ENCODE measurements at regions of chr22 and their contacts with region 1.

Region 1: GRCh38 chr22:36644333-36644757 is 59.2 kb downstream of the CACNG2 start:
- DNase-seq: no peak
- ATAC-seq: no peak
- H3K4me3 Mint-ChIP-seq: no peak overlapping the region
- H3K27ac Mint-ChIP-seq: no peak overlapping the region
- H3K4me1 Mint-ChIP-seq: no peaks in the 10 kb centered on the region
- H3K27me3 Mint-ChIP-seq: peaks cover 39% of the 10 kb centered on the region
- CTCF ChIP-seq: no peak

Region 2: DNA sequence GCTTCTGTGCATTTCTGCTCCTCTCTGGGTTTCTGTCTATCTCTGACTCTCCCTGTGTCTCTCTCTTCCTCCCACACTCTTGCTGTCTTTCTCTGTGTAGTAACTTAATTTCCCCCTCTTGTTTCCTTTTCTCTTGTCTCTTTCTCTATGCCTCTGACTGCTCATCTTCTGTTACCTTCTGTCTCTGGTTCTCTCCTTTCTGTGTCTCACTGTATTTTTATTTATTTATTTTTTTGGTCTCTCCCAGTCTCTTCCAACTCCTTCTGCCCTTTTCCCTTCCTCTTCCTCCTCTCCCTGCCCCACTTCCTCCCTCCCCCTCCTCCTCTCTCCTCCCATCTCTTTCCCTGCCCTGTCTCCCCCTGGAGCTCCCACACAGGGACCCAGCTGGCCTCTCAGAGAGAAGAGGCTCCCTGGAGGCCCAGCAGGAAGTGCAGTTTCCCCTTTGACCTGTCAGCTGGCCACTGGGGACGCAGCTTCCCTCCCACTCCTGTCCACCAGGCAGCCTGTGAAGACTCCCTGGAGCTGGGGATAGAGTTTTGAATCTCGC is 218.3 kb before region 1 on chr22:
- CTCF ChIA-PET with region 1: no interaction called
- POLR2A ChIA-PET with region 1: no interaction called
- intact Hi-C with region 1: no loop called
- DNase-seq: no peak
- ATAC-seq: no peak
- H3K4me3 Mint-ChIP-seq: no peak overlapping the region
- H3K27ac Mint-ChIP-seq: no peak overlapping the region
- H3K4me1 Mint-ChIP-seq: peaks cover 38% of the 10 kb centered on the region
- H3K27me3 Mint-ChIP-seq: no peaks in the 10 kb centered on the region
- CTCF ChIP-seq: no peak

Region 3: DNA sequence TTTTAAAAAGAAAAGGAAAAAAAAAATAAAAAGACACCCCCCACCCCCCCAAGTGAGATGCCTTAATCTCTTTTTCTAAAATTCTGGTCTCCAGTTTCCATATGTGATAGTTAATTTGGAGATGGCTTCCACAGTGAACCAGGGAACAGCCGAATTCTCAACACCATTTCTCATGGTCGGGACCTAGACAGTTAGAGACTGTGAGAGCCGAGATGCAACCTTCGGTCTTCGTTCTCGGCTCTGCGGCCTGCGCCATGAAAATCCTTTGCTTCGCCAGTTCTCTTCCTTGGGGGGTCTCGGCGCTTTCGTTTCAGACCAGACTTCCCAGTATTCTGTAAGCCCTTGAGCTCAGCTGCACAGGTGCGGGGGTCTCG is 58.5 kb after region 1 on chr22:
- CTCF ChIA-PET with region 1: no interaction called
- POLR2A ChIA-PET with region 1: no interaction called
- intact Hi-C with region 1: loop called (anchors 5 kb)
- DNase-seq: no peak
- ATAC-seq: no peak
- H3K4me3 Mint-ChIP-seq: no peak overlapping the region
- H3K27ac Mint-ChIP-seq: no peak overlapping the region
- H3K4me1 Mint-ChIP-seq: peaks cover 4% of the 10 kb centered on the region
- H3K27me3 Mint-ChIP-seq: peaks cover 56% of the 10 kb centered on the region
- CTCF ChIP-seq: no peak

Measured in activated B cell treated with CpG ODN at 0.5 μM for 24 hours (primary cell).